ENCODE measurements at regions of chr12 and their contacts with region 1.

Region 1: DNA sequence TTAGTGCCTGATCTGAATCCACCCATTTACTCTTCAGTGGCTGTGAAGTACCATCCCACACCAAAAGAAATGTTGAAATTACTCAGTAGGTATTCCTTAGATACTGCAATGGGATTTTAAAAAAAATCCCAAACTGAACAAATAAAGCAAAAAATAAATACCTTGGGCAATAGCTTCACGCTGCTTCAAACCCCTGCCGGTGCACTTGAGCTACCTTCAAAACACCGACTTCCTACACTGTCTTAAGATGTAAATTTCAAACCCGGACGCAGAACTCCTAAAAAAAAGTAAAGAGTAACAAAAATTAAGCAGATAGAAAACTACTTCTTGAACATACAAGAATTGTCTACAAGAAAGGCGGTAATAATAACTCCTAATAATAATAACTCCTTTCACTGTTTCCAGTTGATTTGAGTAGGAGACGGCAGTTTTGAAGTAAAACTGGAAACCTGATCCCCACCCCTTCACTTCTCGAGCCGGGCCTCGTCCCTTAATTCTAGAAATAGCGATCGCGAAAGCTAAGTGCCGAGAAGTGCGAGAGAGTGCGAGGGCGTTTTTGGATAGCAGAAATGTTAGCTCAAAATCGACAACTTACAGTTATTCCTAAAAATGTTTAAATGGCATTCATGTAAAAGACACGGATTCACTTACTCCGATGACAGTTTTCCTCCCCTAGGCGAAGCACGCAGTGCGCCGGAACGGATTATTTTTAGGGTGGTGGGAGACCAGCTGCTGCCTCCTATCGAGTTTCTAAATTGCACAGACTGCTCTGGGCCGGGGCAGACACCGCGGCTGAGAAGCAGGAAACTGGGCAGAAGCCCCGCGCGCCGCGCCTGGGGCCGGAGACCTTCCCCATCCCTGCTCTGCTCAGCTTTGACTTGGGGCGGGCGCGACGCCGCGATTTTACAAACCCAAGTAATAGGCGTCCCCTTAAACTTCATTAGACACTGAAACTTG is at the start of gene ABCC9:
- DNase-seq: peak; percentile 33
- ATAC-seq: peak; percentile 75
- H3K4me3 ChIP-seq: peak within 1 kb of the TSS; percentile 63
- H3K27ac ChIP-seq: no peak within 1 kb of the TSS
- H3K4me1 ChIP-seq: 0 out of 2 replicates have a peak, but pooled peaks cover 1% of the 10 kb centered on the region
- H3K27me3 ChIP-seq: peaks cover 15% of the 10 kb centered on the region
- CTCF ChIP-seq: no peak
- POLR2A ChIP-seq: no peak
- RAD21 ChIP-seq: no peak
- total RNA-seq, gene ABCC9: 5.6 and 6.6 TPM in 2 replicates

Region 2: DNA sequence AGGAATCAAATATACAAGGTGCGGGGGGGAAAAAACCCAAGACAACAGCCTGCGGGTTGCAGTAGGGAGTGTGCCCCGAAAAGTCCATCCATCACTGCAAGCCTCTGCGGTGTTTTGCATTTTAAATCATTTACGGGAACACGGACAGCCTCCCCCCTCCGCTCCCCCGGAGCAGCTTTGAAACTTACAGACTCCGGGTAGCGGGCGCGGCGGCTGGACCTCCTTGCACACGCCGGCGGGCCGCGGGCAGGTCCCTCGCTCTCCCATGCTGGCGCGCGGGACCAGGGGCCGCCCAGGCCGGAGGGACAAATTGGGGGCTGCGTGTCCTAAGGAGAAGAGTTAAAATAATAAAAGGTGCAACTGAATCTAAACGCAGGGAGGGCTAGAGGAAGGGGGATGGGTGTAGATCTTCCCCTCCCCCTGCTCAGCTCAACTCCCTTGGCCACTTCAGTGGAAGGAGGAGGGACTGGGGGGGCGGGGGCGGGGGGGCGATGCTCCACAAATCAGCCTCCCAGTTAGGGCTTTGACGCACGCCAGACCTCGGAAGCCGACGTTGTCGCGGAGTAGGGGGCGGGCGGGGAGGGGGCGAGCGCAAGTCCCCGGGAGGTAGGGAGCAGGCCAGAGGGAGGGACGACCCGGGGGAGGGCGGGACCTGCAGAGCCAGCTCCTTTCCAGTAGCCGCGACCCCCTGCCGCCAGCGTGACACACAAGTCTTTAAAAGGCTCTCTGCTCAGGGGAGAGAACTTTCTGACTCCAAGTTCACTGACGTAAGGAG is 166.3 kb before region 1 on chr12 and contains the start of gene KCNJ8:
- CTCF ChIA-PET with region 1: no interaction called
- POLR2A ChIA-PET with region 1: no interaction called
- dilution Hi-C with region 1: no loop called
- in situ Hi-C with region 1: no loop called
- intact Hi-C with region 1: loop called (anchors 2 kb)
- DNase-seq: peak; percentile 50
- ATAC-seq: peak; percentile 81
- H3K4me3 ChIP-seq: peak within 1 kb of the TSS; percentile 96
- H3K27ac ChIP-seq: peak within 1 kb of the TSS; percentile 15; the same call in 1 of the 2 replicates
- H3K4me1 ChIP-seq: peaks cover 2% of the 10 kb centered on the region; the same call in 1 of the 2 replicates
- H3K27me3 ChIP-seq: no peaks in the 10 kb centered on the region
- CTCF ChIP-seq: no peak
- POLR2A ChIP-seq: no peak
- RAD21 ChIP-seq: no peak
- total RNA-seq, gene KCNJ8: 13.9 and 15.8 TPM in 2 replicates

Region 3: GRCh38 chr12:21828779-21829178 is 112.0 kb before region 1 on chr12:
- CTCF ChIA-PET with region 1: no interaction called
- POLR2A ChIA-PET with region 1: no interaction called
- dilution Hi-C with region 1: no loop called
- in situ Hi-C with region 1: no loop called
- intact Hi-C with region 1: loop called (anchors 5 kb)
- DNase-seq: peak; percentile 62
- ATAC-seq: peak; percentile 73
- H3K4me3 ChIP-seq: peak overlapping the region; percentile 19; the same call in 1 of the 2 replicates
- H3K27ac ChIP-seq: peak overlapping the region; percentile 33; the same call in 1 of the 2 replicates
- H3K4me1 ChIP-seq: peaks cover 3% of the 10 kb centered on the region
- H3K27me3 ChIP-seq: no peaks in the 10 kb centered on the region
- CTCF ChIP-seq: no peak
- POLR2A ChIP-seq: no peak
- RAD21 ChIP-seq: no peak

Region 4: DNA sequence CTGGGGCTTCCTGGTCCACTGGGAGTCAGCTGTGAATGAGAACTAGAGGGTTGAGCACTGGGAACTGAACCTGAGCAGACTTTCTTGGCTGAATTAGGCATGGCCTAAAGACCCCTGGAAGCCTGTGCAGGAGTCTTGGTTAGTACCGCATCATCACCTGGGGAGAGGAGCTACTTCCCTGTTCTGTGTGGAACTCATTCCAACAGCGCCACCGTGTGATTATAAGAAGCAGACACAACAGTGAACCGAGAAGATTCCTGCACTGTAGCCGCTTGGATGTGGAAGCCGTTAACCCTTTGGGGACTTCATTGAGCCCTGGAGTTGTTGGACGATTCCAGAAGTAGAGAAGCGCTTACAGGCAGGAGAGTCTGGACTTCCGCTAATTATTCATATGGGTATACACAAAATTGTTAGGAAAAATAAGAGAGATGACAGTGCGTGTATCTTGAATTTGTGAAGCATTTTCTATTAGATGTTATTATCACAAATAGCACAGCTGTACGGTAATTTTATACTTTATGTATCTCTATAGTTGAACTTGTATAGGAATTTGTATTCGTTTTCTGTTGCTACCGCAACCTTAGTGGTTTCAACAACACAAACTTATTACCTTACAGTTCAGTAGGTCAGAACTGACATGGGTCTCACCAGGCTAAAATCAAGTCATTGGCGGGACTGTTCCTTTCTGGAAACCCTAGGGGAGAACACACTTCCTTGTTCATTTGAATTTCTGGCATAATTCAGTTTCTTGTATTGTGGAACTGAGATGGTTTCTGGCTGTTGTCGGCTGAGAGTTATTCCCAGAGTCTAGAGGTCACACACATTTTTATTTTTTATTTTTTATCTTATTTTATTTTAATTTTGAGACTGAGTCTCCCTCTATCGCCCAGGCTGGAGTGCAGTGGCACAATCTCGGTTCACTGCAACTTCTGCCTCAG is 502.8 kb after region 1 on chr12:
- CTCF ChIA-PET with region 1: no interaction called
- POLR2A ChIA-PET with region 1: no interaction called
- dilution Hi-C with region 1: no loop called
- in situ Hi-C with region 1: no loop called
- intact Hi-C with region 1: no loop called
- DNase-seq: peak; percentile 79
- ATAC-seq: peak; percentile 99
- H3K4me3 ChIP-seq: no peak overlapping the region
- H3K27ac ChIP-seq: no peak overlapping the region
- H3K4me1 ChIP-seq: peaks cover 3% of the 10 kb centered on the region; the same call in 1 of the 2 replicates
- H3K27me3 ChIP-seq: no peaks in the 10 kb centered on the region; the same call in 1 of the 2 replicates
- CTCF ChIP-seq: peak; percentile 81
- POLR2A ChIP-seq: no peak
- RAD21 ChIP-seq: peak; percentile 88